AG04449 (cell line): ENCODE measurements at regions of chr14 and their contacts with region 1.

Region 1: DNA sequence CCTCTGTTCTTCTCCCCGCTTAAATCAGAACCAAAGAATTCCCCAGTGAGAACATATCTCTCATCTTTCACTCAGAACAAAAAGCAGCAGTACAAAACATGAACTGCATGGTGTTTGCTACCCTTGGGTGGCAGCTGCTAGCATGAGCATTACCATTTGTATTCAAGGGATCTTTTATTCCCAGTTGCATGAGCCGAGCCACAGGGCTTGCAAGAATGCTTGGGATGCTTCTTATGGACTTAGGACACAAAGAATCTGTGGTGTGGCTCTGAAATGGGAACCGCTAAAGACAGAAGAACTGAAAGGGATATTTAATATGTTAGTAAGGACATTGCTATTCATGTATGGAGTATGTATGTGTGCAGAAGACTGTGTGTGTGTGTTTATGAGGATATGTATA is 190.6 kb downstream of the TMX1 start:
- DNase-seq: no peak
- H3K4me3 ChIP-seq: no peak overlapping the region
- CTCF ChIP-seq: no peak

Region 2: DNA sequence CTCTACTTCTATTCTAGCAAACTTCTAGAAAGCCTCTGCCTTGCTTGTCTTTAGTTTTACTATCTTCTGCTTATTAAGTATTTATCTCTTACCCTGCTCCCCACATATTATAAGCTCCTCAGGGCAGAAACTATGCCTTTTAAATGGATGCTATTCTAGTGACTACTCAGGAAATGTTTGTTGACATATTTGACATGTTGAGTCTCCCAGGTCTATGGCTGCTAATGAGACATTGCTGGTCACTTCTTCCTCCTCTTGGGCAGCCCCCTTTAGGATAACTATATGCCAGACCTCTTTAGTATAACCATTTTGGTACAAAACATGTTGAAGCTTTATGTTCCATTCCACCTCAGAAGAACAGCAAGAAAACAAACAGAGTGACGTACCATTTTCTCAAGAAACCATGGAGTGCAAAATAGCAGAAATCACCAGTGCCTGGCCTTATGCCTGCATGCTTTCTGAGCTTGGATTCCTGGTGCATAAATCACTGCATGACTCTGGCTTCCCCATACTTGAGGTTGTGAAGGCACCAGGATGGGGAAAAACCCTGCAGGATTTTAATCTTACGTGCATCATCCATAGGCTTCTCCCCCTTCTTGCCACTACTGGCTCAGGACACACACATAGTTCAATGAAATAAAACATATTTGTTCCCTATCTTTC is 12.0 kb after region 1 on chr14:
- CTCF ChIA-PET with region 1: interaction called, 13 read pairs
- POLR2A ChIA-PET with region 1: no interaction called
- DNase-seq: peak; percentile 94
- H3K4me3 ChIP-seq: no peak overlapping the region; the same call in 1 of the 2 replicates
- CTCF ChIP-seq: no peak

Region 3: GRCh38 chr14:51479584-51480325 is 49.1 kb after region 1 on chr14:
- CTCF ChIA-PET with region 1: no interaction called
- POLR2A ChIA-PET with region 1: no interaction called
- DNase-seq: no peak
- H3K4me3 ChIP-seq: no peak overlapping the region
- CTCF ChIP-seq: no peak